Esophagus squamous epithelium (tissue), 5 donors: ENCODE measurements at regions of chr7 and their contacts with region 1.

Region 1: GRCh38 chr7:30731619-30732018 is 20.3 kb upstream of the INMT start:
- DNase-seq: no peak
- H3K4me3 ChIP-seq: no peak overlapping the region
- H3K27ac ChIP-seq: no peak overlapping the region
- H3K4me1 ChIP-seq: no peaks in the 10 kb centered on the region
- H3K27me3 ChIP-seq: peaks cover 0 to 24% (median 0%) of the 10 kb centered on the region in 4 donors
- CTCF ChIP-seq: no peak
- POLR2A ChIP-seq: no peak

Region 2: DNA sequence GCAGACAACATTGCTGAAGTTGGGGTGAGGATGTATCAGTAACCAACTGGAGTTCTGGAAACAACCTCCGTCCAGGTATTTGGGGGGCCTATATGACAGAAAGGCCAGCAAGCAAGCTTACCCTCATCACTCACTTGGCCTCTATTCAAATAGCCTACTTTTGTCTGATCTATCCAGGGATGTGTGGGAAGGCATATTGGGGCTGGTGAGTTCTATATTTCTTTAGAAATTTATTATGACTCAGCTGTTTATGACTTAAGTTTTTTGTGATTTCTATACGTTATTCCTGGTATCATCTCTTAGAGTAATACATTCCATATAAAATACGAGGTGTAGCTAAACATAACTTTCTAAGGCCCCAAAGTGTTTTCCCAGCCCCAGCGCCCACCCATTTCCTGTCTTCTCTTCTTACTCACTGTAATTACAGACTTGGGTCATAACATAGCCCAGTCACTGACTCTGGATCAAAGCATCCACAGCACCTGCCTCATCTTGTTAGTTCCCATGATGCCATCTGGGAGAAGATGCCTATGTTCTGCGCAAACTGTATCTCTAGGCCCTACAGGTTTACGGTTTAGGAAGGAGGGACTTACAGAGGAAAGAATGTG is 118.9 kb before region 1 on chr7:
- intact Hi-C with region 1: loop called (anchors 10 kb)
- DNase-seq: no peak
- H3K4me3 ChIP-seq: no peak overlapping the region
- H3K27ac ChIP-seq: no peak overlapping the region
- H3K4me1 ChIP-seq: no peaks in the 10 kb centered on the region
- H3K27me3 ChIP-seq: no peaks in the 10 kb centered on the region
- CTCF ChIP-seq: no peak
- POLR2A ChIP-seq: no peak